Activated T-helper 1 cell treated with anti-CD3 and anti-CD28 coated beads, Interleukin-12 subunit alpha, Interleukin-12 subunit beta, Interleukin-2, Interleukin-4 antibody, amounts not matched to agents 30 ng/mL and 10 ng/mL and 1 ng/mL, durations not matched to agents 14 hours and 24 hours and 36 hours (primary cell): ENCODE measurements at regions of chr3 and their contacts with region 1.

Region 1: DNA sequence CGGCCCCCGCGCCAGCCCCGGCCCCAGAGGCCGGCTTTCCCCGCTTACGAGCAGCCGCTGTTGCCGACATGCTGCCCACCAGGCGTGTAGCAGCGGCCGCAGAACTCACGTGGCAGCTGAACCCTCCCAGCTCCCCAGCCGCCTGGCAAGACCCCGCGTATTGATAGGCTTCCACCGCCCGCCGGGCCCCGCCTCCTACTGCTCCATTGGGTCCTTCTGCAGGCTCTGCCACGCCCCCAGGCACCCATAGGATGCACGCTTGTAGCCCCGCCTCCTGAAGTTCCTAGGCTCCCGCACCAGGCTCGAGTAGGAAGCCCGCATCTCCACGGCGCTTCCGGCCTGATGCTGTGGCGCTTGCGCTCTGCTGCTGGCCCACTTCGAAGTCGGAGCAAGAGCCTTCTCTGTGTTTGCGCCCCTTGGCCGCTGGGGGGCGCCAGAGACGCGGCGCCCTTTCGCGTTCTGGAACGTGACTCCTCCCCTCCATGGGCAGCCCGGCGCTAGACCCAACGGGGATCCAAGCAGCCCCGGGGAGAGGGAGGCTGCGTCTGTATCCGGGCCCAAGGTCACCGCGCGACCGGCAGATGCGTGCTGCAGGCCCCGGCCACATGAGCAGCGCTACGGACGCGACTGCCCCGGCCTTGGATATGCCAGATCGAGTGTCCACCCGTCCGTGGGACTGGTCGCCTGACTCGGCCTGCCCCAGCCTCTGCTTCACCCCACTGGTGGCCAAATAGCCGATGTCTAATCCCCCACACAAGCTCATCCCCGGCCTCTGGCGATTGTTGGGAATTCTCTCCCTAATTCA is at the starts of genes PARP3 and RRP9:
- DNase-seq: peak; percentile 100
- H3K4me3 Mint-ChIP-seq: peak within 1 kb of the TSS; percentile 89
- H3K27ac Mint-ChIP-seq: peak within 1 kb of the TSS; percentile 84
- H3K4me1 Mint-ChIP-seq: peaks cover 42% of the 10 kb centered on the region
- H3K27me3 Mint-ChIP-seq: no peaks in the 10 kb centered on the region
- total RNA-seq, gene PARP3: 13.4 and 14.5 TPM in 2 replicates
- total RNA-seq, gene RRP9: 91.8 and 93.1 TPM in 2 replicates

Region 2: DNA sequence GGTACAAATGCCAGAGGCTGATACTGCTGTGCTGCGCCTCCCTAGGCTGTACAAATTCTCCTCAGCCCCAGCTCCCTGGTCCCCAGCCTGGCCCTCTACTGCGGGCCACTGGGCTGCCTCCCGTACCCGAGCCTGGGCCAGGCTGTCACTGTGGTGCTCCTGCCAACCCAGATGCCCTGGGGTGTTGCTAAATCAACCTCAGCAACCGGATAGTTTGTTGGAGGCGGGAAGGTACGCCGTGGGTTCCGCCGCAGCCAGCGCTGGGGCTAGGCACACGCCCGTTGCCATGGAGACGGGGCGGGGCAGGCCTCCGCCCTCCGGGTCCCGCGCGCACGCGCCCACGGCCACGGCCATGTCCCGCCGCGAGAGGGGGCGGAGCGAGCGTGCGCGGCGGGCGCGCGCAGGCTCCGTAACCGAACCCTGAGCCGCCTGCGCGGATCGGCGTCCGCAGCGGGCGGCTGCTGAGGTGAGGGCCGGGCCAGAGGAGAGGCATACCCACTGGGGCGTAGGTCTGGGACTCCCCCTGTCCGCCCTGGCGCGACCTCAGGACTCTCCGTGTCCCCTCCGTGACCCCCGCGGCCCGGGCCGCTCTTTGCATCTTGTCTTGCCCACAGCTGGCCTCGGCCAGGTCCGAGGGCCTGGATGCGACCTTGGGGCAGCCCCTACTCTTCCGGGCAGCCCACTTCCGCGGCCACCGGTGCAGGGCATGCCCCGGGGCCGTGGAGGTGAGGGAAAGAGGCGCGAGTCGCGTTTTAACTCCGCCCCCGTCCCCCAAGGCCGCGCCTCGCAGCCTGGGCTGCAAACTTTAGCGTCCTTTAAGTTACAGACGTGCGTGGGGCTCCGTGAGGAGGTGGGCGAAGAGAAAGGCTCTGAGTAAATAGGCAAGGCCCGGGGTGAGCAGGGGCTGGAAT is 270.9 kb before region 1 on chr3 and contains the start of gene TEX264:
- intact Hi-C with region 1: loop called (anchors 2 kb)
- DNase-seq: peak; percentile 95
- H3K4me3 Mint-ChIP-seq: peak within 1 kb of the TSS; percentile 86
- H3K27ac Mint-ChIP-seq: peak within 1 kb of the TSS; percentile 87
- H3K4me1 Mint-ChIP-seq: peaks cover 65% of the 10 kb centered on the region
- H3K27me3 Mint-ChIP-seq: no peaks in the 10 kb centered on the region
- total RNA-seq, gene TEX264: 50.3 and 52.0 TPM in 2 replicates

Region 3: DNA sequence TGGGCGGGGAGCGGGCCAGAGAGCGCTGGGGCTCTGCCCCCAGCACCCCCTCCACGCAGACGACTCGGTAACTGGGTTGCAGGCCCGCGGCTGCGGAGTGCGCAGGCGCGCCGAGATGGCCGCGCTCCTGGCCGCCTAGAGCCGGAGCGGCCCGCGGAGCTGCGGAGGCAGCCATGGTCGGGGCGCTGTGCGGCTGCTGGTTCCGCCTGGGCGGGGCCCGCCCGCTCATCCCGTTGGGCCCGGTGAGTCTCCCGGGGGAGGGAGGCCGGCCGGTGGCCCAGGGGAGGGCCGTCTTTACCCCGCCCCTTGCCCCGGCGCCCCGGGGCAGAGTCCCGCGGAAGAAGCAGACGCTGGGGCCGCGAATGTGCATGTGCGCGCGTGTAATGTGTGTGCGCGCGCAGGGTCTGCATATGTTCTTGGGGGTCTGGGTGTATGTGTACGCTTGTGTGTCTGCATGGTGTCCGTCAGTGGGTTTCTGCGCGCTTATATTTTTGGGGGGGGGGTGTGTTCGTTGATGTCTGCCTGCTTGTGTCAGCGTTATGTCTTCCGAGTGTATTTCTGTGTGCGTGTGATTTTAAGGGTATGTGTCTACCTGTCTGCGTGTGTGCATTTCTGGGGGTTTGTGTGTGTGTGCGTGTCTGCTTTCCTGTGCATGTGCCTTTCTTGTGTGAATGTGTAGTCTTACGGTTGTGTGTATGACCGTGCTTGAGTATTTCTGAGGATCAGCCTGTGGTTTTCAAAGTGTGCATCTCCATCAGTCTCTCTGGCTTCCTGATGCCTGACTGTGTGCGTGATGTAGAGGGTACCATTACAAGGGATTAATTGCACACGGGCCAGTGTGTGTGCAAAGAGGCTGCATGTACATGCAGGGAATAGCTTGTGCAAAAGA is 33.2 kb after region 1 on chr3 and contains the start of gene ABHD14A:
- intact Hi-C with region 1: loop called (anchors 1 kb)
- DNase-seq: peak; percentile 72
- H3K4me3 Mint-ChIP-seq: peak within 1 kb of the TSS; percentile 87
- H3K27ac Mint-ChIP-seq: peak within 1 kb of the TSS; percentile 90
- H3K4me1 Mint-ChIP-seq: peaks cover 24% of the 10 kb centered on the region
- H3K27me3 Mint-ChIP-seq: no peaks in the 10 kb centered on the region
- total RNA-seq, gene ABHD14A: 12.8 and 13.3 TPM in 2 replicates

Region 4: GRCh38 chr3:51995346-51996163 is 53.6 kb after region 1 on chr3 and contains the start of gene RPL29:
- intact Hi-C with region 1: loop called (anchors 1 kb)
- DNase-seq: peak; percentile 88
- H3K4me3 Mint-ChIP-seq: peak within 1 kb of the TSS; percentile 98
- H3K27ac Mint-ChIP-seq: peak within 1 kb of the TSS; percentile 100
- H3K4me1 Mint-ChIP-seq: peaks cover 24% of the 10 kb centered on the region
- H3K27me3 Mint-ChIP-seq: peaks cover 5% of the 10 kb centered on the region
- total RNA-seq, gene RPL29: 1,590 and 1,596 TPM in 2 replicates

Region 5: GRCh38 chr3:52070724-52071621 is 129.0 kb after region 1 on chr3:
- intact Hi-C with region 1: no loop called
- DNase-seq: no peak
- H3K4me3 Mint-ChIP-seq: no peak overlapping the region
- H3K27ac Mint-ChIP-seq: no peak overlapping the region
- H3K4me1 Mint-ChIP-seq: no peaks in the 10 kb centered on the region
- H3K27me3 Mint-ChIP-seq: no peaks in the 10 kb centered on the region

Region 6: GRCh38 chr3:52090131-52090932 is 148.3 kb after region 1 on chr3:
- intact Hi-C with region 1: no loop called
- DNase-seq: no peak
- H3K4me3 Mint-ChIP-seq: no peak overlapping the region
- H3K27ac Mint-ChIP-seq: no peak overlapping the region
- H3K4me1 Mint-ChIP-seq: peaks cover 31% of the 10 kb centered on the region
- H3K27me3 Mint-ChIP-seq: no peaks in the 10 kb centered on the region

Region 7: DNA sequence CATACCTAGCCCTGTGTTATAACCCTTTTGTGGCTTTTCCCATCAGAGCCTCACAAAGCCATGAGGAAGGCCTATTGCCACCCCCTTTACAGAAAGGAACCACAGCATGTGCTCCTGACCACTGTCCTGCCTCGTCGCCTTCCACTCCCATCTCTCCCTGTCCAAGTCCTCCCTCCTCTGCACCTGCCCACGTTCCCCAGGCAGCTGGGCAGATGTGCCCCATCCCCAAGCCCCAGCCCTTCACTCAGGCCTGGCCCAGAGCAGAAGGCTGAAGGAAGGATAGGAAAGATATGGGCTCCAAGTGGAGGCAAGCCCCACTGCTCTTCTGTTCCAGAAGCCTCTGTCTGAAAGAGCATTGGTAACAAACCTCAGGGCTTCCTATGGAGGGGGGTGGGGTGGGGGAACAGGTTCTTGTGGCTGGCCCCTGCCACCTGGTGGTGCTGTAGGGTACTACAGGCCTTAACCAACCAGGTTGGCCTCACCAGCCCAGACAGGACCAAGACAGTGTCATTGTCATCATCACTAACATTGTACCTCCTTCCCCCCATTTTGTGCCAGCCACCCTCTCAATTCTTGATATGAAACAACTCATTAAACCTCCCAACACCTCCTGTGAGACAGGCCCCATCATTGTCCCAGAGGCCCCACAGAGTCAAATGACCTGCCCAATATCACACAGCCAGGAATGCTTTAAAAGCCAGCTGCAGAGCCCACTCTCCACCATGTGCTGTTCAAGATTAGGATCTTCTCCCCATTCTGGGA is 202.2 kb after region 1 on chr3:
- intact Hi-C with region 1: loop called (anchors 1 kb)
- DNase-seq: peak; percentile 71
- H3K4me3 Mint-ChIP-seq: no peak overlapping the region
- H3K27ac Mint-ChIP-seq: peak overlapping the region; percentile 18
- H3K4me1 Mint-ChIP-seq: peaks cover 14% of the 10 kb centered on the region
- H3K27me3 Mint-ChIP-seq: no peaks in the 10 kb centered on the region

Region 8: DNA sequence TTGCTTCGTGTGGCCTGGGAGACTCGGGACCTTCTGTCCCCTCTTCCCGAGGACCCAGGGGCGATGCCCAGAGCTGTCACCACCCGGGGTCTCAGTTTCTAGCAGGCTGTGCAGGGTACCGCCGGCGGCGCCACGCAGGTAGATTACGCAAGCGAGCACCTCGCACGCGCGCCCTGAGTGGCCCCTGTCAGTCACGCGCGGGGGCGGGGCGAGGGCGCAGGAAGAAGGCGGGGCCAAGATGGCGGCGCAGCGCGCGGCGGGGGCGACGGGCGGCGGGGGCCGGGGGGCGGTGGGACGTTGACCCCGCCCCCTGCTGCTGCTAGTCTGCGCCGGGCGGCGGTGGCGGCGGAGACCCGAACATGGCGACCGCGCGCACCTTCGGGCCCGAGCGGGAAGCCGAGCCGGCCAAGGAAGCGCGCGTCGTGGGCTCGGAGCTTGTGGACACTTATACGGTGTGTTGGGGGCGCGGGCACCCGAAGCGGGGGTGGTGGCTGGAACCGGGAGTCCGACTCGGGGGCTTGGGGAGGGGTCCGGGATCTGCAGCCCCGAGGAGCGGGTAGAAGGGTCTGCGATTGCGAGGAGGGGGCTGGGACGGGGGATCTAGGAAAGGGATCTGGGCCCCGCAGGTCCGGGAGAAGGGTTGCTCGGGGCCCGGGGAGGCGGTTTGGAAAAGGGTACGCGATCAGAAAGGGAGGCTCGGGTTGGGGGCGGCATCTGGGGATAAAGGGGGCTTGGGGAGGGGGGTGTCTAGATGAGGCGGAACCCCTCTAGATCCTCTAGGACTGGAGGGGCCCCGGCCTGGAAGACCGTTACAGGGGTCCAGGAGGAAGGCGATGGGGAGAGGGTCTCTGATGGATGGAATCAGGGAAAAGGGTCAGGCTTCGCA is 513.5 kb after region 1 on chr3 and contains the start of gene NISCH:
- intact Hi-C with region 1: loop called (anchors 1 kb)
- DNase-seq: peak; percentile 96
- H3K4me3 Mint-ChIP-seq: peak within 1 kb of the TSS; percentile 96
- H3K27ac Mint-ChIP-seq: peak within 1 kb of the TSS; percentile 93
- H3K4me1 Mint-ChIP-seq: peaks cover 39% of the 10 kb centered on the region
- H3K27me3 Mint-ChIP-seq: no peaks in the 10 kb centered on the region
- total RNA-seq, gene NISCH: 72.0 and 74.2 TPM in 2 replicates